Cardiac septum (tissue), 1 donor: ENCODE measurements at regions of chr1 and their contacts with region 1.

Region 1: DNA sequence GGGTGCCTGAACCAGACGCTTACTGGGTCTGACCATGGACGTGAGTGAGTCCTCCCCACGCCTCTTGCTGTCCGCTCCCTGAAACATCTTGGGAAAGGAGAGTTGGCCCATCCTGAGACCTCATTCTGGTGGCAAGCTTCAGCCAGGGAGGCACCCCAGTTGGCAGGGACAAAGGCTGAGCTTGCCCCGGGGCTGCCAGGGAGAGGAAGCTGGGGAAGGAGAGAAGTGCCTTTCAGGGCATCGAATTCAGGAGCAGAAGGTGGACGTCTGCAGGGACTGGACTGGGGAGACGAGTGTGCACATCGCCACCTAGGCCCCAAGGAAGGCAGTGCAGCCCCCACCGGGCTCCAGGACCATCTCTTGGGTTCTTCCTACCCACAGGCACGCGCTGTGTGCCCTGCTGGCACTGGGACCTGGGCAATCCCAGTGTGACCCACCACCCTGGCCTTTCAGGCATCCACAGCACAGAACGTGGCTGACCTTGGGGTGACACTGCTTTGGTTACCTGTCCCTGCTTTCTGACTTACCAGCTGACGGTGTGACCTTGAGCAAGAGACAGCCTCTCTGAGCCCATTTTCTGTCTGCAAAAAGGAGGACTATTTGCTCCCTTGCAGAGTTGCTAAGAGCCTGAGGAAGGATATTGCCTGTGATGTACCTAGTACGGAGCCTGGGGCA is 133.0 kb upstream of the WNT4 start:
- DNase-seq: no peak

Region 2: DNA sequence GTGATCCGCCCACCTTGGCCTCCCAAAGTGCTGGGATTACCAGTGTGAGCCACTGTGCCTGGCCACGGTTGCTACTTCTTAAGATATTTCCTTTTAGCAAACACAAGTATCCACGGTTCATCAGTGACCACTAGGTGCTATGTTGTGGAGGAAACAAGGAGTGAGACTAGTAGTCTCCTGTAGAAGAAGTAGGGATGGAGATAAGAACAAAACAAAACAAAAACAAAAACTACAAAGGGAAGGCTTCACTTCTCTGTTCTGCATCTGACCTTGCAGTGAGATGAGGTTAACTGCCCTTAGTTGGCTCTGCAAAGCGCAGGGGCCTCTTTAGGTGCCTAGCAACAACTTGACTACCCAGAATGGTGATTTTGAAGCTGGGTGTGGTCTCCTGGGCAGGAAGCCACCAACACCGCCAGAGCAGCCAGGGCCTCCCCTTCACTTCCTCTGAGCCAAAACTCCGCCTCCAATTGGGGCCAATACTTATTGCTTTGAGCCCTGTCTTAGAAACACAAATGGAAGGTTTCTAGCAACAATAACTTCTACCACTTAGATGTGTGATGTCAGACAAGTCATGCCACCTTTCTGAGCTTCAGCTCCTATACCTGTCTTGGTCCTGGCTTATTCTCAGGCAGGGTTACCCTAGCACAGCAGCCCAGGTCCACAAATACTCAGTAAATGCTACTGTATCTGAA is 236.1 kb before region 1 on chr1:
- intact Hi-C with region 1: loop called (anchors 10 kb)
- DNase-seq: peak; percentile 88

Region 3: GRCh38 chr1:22105611-22106207 is 170.1 kb before region 1 on chr1:
- intact Hi-C with region 1: loop called (anchors 10 kb)
- DNase-seq: no peak

Region 4: DNA sequence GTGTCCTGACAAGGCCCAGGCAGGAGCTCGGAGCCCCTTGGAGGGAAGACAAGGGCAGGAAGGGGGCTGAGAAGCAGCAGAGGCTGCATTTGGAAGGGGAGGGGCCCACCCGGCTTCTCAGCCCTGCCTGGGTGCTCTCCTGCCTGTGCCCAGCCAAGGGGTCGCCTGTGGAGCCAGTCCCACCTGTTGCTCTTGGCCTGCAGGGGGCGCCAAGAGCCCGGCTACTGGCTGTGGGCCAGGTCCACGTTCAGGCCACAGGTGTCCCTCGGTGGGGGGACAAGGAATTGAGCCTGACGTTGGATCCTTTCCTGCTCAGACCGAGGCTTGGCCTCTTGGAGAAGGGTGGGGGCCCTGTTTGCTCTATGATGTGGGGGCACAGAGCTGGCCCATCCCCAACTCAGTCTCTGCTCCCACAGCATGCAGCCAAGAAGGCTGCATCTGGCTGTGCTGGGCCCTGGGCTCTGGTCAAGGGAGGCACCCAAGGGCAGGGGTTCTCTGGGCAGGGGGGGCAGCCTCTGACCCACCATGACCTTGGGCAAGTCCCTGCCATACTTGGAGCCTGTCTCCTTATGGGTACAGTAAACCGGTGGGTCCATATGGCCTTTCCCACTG is 143.9 kb before region 1 on chr1:
- intact Hi-C with region 1: loop called (anchors 10 kb)
- DNase-seq: no peak

Region 5: GRCh38 chr1:22171966-22172670 is 103.7 kb before region 1 on chr1:
- intact Hi-C with region 1: no loop called
- DNase-seq: no peak